Naive thymus-derived CD4-positive, alpha-beta T cell (primary cell): ENCODE measurements at regions of chr6 and their contacts with region 1.

Region 1: GRCh38 chr6:43667245-43668150 is 20.1 kb downstream of the MRPS18A start:
- DNase-seq: peak; percentile 63 to 85 (median 77)
- ATAC-seq: peak; percentile 87
- H3K4me3 ChIP-seq: no peak overlapping the region
- H3K4me3 Mint-ChIP-seq: peak overlapping the region in 9 of 10 donors; percentile 23 to 79 (median 64)
- H3K27ac ChIP-seq: peak overlapping the region; percentile 10
- H3K27ac Mint-ChIP-seq: peak overlapping the region in 7 of 9 donors; percentile 22 to 89 (median 68)
- H3K4me1 ChIP-seq: peaks cover 8 to 9% of the 10 kb centered on the region in 2 donors
- H3K4me1 Mint-ChIP-seq: peaks cover 14 to 45% (median 18%) of the 10 kb centered on the region in 7 donors
- H3K27me3 ChIP-seq: no peaks in the 10 kb centered on the region
- H3K27me3 Mint-ChIP-seq: no peaks in the 10 kb centered on the region

Region 2: DNA sequence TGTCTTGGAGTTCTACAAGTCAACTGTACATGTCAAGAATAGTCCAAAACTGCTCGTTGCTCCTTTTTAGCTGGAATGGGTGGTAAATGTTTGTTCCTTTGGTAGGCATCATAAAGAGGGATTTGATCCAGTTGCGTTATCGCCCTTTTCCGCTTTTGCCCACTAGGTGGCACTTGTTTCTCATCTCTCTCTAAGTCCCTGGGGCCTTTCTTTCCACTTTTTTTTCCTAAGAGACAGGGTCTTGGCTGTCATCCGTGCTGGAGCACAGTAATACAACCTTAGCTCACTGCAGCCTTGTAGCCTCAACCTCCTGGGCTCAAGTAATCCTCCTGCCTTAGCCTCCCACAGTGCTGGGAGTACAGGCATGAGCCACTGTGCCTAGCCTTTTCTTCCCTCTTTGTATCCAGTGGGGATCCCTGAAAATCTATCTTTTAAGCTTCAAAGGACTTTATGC is 59.2 kb before region 1 on chr6:
- CTCF ChIA-PET with region 1: interaction called, 3 read pairs
- POLR2A ChIA-PET with region 1: no interaction called
- intact Hi-C with region 1: loop called in 1 of 2 experiments (anchors 2 kb)
- DNase-seq: peak in 8 of 9 donors; percentile 12 to 49 (median 43)
- ATAC-seq: peak; percentile 57
- H3K4me3 ChIP-seq: no peak overlapping the region
- H3K4me3 Mint-ChIP-seq: no peak overlapping the region
- H3K27ac ChIP-seq: no peak overlapping the region
- H3K27ac Mint-ChIP-seq: peak overlapping the region in 4 of 9 donors; percentile 0 to 16 (median 4)
- H3K4me1 ChIP-seq: no peaks in the 10 kb centered on the region
- H3K4me1 Mint-ChIP-seq: peaks cover 0 to 10% (median 5%) of the 10 kb centered on the region in 7 donors
- H3K27me3 ChIP-seq: no peaks in the 10 kb centered on the region
- H3K27me3 Mint-ChIP-seq: no peaks in the 10 kb centered on the region

Region 3: DNA sequence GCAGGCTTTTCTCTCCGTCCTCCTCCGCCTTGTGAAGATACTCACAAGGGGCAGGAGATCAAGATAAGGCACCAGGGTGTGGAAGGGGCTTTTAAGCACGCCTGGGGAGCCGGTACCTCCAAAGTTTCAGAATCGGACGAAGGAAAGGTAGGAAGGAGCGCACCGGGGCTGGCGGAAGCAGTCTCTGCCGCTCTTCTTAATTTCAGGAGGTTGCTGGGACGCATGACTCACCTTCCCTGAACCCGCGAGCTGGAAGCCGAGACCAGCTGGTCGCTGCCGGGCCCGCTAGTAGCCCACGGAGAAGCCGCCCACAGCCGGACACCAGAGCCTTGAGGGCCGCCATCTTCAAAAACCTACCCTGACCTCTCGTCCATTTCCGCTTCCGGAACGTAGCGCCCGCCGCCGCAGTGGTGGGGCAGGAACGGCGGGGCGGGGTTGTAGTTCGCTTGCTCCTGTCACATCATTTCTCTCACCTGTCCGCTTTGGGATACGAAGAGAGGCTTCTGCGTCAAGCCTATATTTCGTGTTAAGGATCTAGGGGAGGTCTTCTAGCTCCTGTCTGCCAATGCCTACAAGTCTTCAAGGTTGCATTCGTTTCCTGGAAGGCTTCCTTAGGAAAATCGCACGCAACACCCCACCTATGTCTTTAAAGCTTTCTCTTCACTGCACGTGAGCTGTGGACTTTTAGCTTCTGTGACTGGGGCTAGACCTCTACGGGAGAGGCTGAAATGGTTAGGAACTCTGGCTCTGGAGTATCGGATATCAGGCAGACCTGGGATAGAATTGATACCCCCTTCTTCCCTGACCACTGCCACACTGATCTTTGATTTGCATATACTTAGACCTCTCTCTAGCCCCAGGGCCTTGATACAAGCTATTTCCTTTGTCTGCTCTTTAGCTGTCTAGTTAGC is 20.2 kb after region 1 on chr6 and contains the start of gene MRPS18A:
- CTCF ChIA-PET with region 1: interaction called, 10 read pairs
- POLR2A ChIA-PET with region 1: no interaction called
- intact Hi-C with region 1: loop called in 1 of 2 experiments (anchors 1 kb)
- DNase-seq: peak; percentile 53 to 82 (median 72)
- ATAC-seq: peak; percentile 97
- H3K4me3 ChIP-seq: peak within 1 kb of the TSS; percentile 98
- H3K4me3 Mint-ChIP-seq: peak within 1 kb of the TSS; percentile 94 to 99 (median 97)
- H3K27ac ChIP-seq: peak within 1 kb of the TSS; percentile 81
- H3K27ac Mint-ChIP-seq: peak within 1 kb of the TSS; percentile 87 to 96 (median 94)
- H3K4me1 ChIP-seq: peaks cover 10 to 22% of the 10 kb centered on the region in 2 donors
- H3K4me1 Mint-ChIP-seq: peaks cover 28 to 55% (median 52%) of the 10 kb centered on the region in 7 donors
- H3K27me3 ChIP-seq: no peaks in the 10 kb centered on the region
- H3K27me3 Mint-ChIP-seq: peaks cover 0 to 3% (median 0%) of the 10 kb centered on the region in 5 donors
- total RNA-seq, gene MRPS18A: 20.9 to 39.2 (median 28.7) TPM

Region 4: DNA sequence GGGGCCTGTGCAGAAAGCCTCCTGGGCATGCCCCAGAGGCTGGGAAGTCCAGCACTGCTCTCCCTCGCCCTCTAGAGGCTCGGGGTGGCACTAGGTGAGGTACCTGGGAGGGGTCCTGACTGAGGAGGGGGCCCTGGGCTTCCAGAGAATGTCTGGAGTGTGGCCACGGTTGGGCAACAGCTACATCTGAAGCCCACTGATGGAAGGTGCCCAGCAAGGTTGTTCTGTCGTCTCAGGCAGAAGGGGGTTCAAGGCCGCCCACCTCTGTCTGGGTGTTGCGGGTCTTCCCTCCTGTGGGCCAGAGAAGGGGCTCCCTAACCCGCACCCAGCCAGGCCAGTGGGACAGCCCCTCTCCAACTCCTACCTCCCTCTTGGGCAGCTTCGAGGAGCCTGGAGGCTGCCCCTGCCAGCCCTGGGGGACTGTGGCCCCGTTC is 91.1 kb after region 1 on chr6:
- CTCF ChIA-PET with region 1: no interaction called
- POLR2A ChIA-PET with region 1: no interaction called
- intact Hi-C with region 1: loop called (anchors 2 to 5 kb)
- DNase-seq: peak in 1 of 9 donors; percentile 42
- ATAC-seq: peak; percentile 58
- H3K4me3 ChIP-seq: no peak overlapping the region
- H3K4me3 Mint-ChIP-seq: no peak overlapping the region
- H3K27ac ChIP-seq: no peak overlapping the region
- H3K27ac Mint-ChIP-seq: peak overlapping the region in 1 of 9 donors; percentile 46
- H3K4me1 ChIP-seq: no peaks in the 10 kb centered on the region
- H3K4me1 Mint-ChIP-seq: peaks cover 0 to 3% (median 0%) of the 10 kb centered on the region in 7 donors
- H3K27me3 ChIP-seq: no peaks in the 10 kb centered on the region
- H3K27me3 Mint-ChIP-seq: peaks cover 0 to 16% (median 0%) of the 10 kb centered on the region in 5 donors

Region 5: DNA sequence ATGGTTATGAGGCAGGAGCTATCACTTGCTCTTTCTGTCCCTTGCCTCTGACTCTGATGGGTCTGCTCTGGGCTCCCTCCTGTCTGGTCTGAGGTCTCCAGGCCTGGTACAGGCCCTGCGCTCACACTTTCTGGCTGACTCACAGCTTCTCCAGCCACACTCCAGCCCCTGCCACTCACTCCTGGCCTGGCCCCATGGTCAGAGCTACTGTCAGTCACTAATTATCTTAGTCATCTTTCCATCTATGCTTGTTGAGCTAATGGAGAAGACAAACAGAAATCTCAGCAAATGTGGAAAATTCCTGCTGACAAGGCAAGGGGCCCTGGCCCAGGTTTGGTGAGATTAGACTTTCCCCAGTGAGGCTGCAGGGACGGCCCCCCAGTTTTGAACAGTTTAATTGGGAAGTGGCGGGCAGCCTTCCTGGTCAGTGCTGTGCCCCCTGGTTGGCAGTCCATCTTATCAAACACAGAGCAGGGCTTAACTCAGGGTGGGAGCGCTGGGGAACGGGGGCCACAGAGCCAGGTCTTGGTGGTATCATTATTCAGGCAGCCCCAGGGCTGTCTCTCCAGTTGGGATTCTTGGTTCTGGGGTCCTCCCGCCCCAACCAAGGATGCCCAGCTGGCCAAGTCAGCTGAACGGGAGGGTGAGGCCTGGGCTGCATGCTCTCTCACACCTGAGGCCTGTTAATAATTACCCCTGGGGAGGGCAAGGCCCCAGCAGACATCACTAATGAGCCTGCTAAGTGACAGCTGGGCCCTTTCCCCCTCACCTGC is 165.9 kb after region 1 on chr6:
- CTCF ChIA-PET with region 1: no interaction called
- POLR2A ChIA-PET with region 1: no interaction called
- intact Hi-C with region 1: no loop called
- DNase-seq: no peak
- ATAC-seq: no peak
- H3K4me3 ChIP-seq: no peak overlapping the region
- H3K4me3 Mint-ChIP-seq: no peak overlapping the region
- H3K27ac ChIP-seq: no peak overlapping the region
- H3K27ac Mint-ChIP-seq: no peak overlapping the region
- H3K4me1 ChIP-seq: no peaks in the 10 kb centered on the region
- H3K4me1 Mint-ChIP-seq: no peaks in the 10 kb centered on the region
- H3K27me3 ChIP-seq: no peaks in the 10 kb centered on the region
- H3K27me3 Mint-ChIP-seq: peaks cover 0 to 15% (median 4%) of the 10 kb centered on the region in 5 donors

Region 6: GRCh38 chr6:44275749-44276648 is 608.5 kb after region 1 on chr6:
- CTCF ChIA-PET with region 1: no interaction called
- POLR2A ChIA-PET with region 1: no interaction called
- intact Hi-C with region 1: no loop called
- DNase-seq: peak in 3 of 9 donors; percentile 25 to 49 (median 29)
- ATAC-seq: peak; percentile 62
- H3K4me3 ChIP-seq: no peak overlapping the region
- H3K4me3 Mint-ChIP-seq: peak overlapping the region in 4 of 10 donors; percentile 23 to 55 (median 36)
- H3K27ac ChIP-seq: no peak overlapping the region
- H3K27ac Mint-ChIP-seq: no peak overlapping the region
- H3K4me1 ChIP-seq: no peaks in the 10 kb centered on the region
- H3K4me1 Mint-ChIP-seq: peaks cover 4 to 14% (median 7%) of the 10 kb centered on the region in 7 donors
- H3K27me3 ChIP-seq: peaks cover 0 to 21% of the 10 kb centered on the region in 2 donors
- H3K27me3 Mint-ChIP-seq: peaks cover 49 to 73% (median 63%) of the 10 kb centered on the region in 5 donors

Region 7: GRCh38 chr6:44338228-44339122 is 671.0 kb after region 1 on chr6:
- CTCF ChIA-PET with region 1: no interaction called
- POLR2A ChIA-PET with region 1: no interaction called
- intact Hi-C with region 1: loop called in 1 of 2 experiments (anchors 5 kb)
- DNase-seq: peak; percentile 43 to 67 (median 62)
- ATAC-seq: peak; percentile 92
- H3K4me3 ChIP-seq: no peak overlapping the region
- H3K4me3 Mint-ChIP-seq: no peak overlapping the region
- H3K27ac ChIP-seq: no peak overlapping the region
- H3K27ac Mint-ChIP-seq: no peak overlapping the region
- H3K4me1 ChIP-seq: no peaks in the 10 kb centered on the region
- H3K4me1 Mint-ChIP-seq: peaks cover 0 to 4% (median 0%) of the 10 kb centered on the region in 7 donors
- H3K27me3 ChIP-seq: no peaks in the 10 kb centered on the region
- H3K27me3 Mint-ChIP-seq: peaks cover 18 to 33% (median 24%) of the 10 kb centered on the region in 5 donors

Region 8: GRCh38 chr6:44788387-44788981 is 1121.0 kb after region 1 on chr6:
- CTCF ChIA-PET with region 1: no interaction called
- POLR2A ChIA-PET with region 1: no interaction called
- intact Hi-C with region 1: no loop called
- DNase-seq: no peak
- ATAC-seq: no peak
- H3K4me3 ChIP-seq: no peak overlapping the region
- H3K4me3 Mint-ChIP-seq: peak overlapping the region in 8 of 10 donors; percentile 8 to 79 (median 32)
- H3K27ac ChIP-seq: no peak overlapping the region
- H3K27ac Mint-ChIP-seq: peak overlapping the region in 3 of 9 donors; percentile 32 to 38 (median 33)
- H3K4me1 ChIP-seq: peaks cover 0 to 14% of the 10 kb centered on the region in 2 donors
- H3K4me1 Mint-ChIP-seq: peaks cover 13 to 27% (median 20%) of the 10 kb centered on the region in 7 donors
- H3K27me3 ChIP-seq: no peaks in the 10 kb centered on the region
- H3K27me3 Mint-ChIP-seq: peaks cover 0 to 13% (median 11%) of the 10 kb centered on the region in 5 donors